CD4-positive, alpha-beta T cell (primary cell): ENCODE measurements at regions of chrX and their contacts with region 1.

Region 1: DNA sequence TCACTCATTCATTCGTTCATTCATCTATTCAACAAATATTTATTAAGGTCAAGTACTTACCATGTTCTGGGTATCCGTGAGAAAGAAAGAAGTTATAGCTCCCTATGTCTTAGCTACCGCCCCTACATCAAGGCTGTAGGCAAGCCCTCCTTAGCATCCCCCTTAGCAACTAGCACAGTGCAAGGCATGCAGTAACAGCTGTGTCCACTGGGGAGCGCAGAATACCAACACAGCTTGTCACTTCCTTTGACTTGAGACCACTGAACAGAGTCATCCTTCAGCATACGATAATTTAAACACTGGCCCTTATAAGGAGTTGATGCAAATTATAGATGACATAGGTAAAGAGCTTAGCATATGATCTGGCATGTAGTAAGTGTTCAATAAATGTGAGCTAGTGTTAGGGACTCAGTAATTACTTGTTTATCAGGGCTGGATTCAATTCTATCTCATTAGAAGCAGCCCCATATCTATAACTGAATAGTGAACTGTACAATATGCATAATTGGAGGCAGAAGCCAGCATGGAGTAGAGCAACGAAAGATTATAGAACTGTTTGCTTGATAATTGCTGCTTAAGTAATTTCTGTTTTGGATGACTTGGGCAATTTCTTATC is 8.7 kb downstream of the KIAA1210 start:
- DNase-seq: peak; percentile 12 to 63 (median 36)
- ATAC-seq: peak; percentile 63
- H3K4me3 ChIP-seq: no peak overlapping the region
- H3K4me3 Mint-ChIP-seq: no peak overlapping the region
- H3K27ac ChIP-seq: no peak overlapping the region
- H3K27ac Mint-ChIP-seq: no peak overlapping the region
- H3K4me1 ChIP-seq: no peaks in the 10 kb centered on the region
- H3K4me1 Mint-ChIP-seq: no peaks in the 10 kb centered on the region
- H3K27me3 ChIP-seq: no peaks in the 10 kb centered on the region
- H3K27me3 Mint-ChIP-seq: peaks cover 4% of the 10 kb centered on the region
- CTCF ChIP-seq: peak; percentile 66

Region 2: GRCh38 chrX:119266364-119266995 is 147.6 kb after region 1 on chrX:
- CTCF ChIA-PET with region 1: interaction called, 5 read pairs
- POLR2A ChIA-PET with region 1: no interaction called
- intact Hi-C with region 1: loop called (anchors 1 kb)
- DNase-seq: peak in 6 of 14 experiments; percentile 4 to 45 (median 31)
- ATAC-seq: no peak
- H3K4me3 ChIP-seq: no peak overlapping the region
- H3K4me3 Mint-ChIP-seq: no peak overlapping the region
- H3K27ac ChIP-seq: no peak overlapping the region
- H3K27ac Mint-ChIP-seq: no peak overlapping the region
- H3K4me1 ChIP-seq: no peaks in the 10 kb centered on the region
- H3K4me1 Mint-ChIP-seq: no peaks in the 10 kb centered on the region
- H3K27me3 ChIP-seq: peaks cover 0 to 6% of the 10 kb centered on the region in 2 experiments
- H3K27me3 Mint-ChIP-seq: peaks cover 13% of the 10 kb centered on the region
- CTCF ChIP-seq: peak; percentile 49